Posterior cingulate gyrus (tissue), 11 donors: ENCODE measurements at regions of chr1 and their contacts with region 1.

Region 1: GRCh38 chr1:19643602-19644394 is at the start of gene NBL1:
- DNase-seq: peak in 9 of 10 donors; percentile 44 to 93 (median 58)

Region 2: GRCh38 chr1:19596714-19597495 is 46.9 kb before region 1 on chr1:
- intact Hi-C with region 1: loop called (anchors 10 kb)
- DNase-seq: peak; percentile 88 to 99 (median 96)

Region 3: GRCh38 chr1:19698181-19698580 is 54.4 kb after region 1 on chr1:
- intact Hi-C with region 1: no loop called
- DNase-seq: peak in 1 of 10 donors; percentile 75